Left cardiac atrium (tissue), 4 donors: ENCODE measurements at regions of chr3 and their contacts with region 1.

Region 1: GRCh38 chr3:180802837-180803236 is 109.6 kb upstream of the FXR1 start:
- DNase-seq: no peak
- ATAC-seq: no peak

Region 2: DNA sequence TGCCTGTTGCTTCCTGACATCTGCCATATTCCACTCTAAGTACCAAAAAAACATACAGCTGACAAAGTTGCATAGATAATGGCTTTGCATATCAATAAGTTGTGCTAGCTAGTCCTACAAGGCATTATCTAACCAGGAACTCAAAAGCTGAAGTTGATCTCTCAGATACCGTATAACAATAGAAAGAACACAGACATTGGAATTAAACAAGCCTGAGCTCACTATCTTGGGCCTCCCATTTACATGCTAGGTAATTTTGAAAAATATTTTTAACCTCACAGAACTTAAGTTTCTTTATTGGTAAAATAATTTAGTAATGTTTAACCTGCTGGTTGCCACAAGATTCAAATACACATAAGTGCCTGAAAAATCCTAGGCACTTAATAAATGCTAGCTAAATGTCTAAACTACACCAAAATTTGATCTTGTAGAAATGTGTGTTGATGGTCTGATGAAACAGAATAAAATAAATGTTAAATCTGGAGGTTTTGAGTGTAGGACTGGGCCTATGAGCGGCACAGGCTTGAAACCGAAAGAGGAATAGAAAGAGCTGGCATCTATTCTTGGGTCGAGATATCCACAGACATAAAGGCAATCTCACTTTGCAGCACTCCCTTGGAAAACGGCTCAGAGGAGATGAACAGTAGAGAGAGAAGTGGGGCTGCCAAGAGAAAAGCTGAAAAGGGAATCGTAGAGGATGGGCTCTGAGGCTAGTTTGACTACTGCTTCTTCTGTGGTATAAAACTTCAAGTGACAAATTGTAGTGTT is 230.8 kb before region 1 on chr3:
- intact Hi-C with region 1: no loop called
- DNase-seq: no peak
- ATAC-seq: no peak

Region 3: DNA sequence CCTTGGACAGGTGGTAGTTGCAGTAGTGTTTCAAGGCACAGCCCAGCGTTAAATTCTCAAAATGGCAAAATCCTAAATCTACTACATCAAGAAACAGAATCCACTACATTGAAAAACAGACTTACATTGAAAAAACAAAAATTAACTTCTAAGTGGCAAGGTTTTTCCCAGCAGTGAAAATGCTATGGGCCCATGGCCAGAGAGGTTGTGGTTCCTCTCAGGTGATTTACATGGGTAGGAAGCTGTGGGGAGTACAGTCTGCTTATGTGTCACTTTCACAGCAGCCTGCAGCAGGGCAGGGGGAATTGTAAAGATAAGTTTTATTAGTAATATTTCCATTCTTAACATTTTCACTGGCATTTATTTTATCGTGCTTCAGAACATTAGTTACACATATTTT is 176.0 kb before region 1 on chr3:
- intact Hi-C with region 1: no loop called
- DNase-seq: no peak
- ATAC-seq: no peak

Region 4: DNA sequence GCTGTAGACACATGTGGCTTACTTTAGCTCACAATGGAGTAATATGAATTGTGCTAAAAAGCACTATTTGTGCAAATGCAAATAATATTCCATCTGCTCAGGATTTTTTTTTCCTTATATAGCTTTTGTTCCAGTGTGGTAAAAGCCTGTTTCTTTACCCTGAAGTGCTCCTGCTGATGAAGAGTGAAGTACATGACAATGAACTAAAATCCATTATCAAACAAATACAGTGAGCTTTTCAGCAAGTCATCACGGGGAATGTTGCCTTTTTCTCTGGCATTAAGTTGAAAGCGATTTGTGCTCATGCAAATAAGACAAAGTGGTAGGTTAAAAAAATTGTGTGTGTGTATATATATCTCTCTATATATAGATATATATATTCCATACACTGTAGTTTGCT is 94.9 kb before region 1 on chr3:
- intact Hi-C with region 1: no loop called
- DNase-seq: no peak
- ATAC-seq: no peak

Region 5: GRCh38 chr3:181176601-181177000 is 373.8 kb after region 1 on chr3:
- intact Hi-C with region 1: loop called (anchors 5 kb)
- DNase-seq: peak; percentile 70
- ATAC-seq: no peak

Region 6: DNA sequence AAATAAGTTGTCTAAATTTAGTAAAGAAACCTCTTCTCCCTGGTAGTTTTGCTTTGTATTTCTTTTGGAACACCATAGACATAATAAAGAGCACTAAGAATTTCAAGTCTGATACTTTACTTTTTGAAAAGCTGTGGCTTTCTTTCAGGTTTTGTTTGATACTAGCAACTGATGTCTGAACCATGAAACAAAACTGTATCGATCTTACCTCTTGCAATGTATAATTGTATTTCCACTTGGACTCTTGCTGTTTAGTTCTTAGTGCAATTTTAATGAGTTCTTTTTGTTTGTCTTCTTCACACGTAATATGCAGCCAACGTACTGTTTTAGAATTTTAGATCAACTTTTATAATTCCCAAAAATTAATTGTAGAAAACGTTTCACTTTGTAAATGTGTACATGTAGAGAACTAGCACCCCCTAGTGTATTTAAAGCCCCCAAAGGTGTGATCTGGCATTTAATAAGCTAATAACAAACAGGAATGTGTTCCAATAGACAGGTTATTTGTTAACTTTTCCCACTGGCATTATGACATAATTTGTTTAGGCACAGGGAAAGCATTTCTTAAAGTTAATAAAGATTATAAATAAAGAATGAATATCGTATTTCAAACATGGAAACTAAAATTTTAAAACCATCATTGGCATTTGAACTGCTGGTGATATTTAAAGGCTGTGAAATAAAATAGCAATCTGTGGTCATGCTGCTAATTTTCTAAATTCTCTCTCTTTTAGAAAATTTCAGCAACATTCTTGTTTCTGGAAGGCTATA is 475.8 kb after region 1 on chr3:
- intact Hi-C with region 1: loop called in 1 of 2 experiments (anchors 10 kb)
- DNase-seq: no peak
- ATAC-seq: no peak